HAP-1 (cell line): ENCODE measurements at regions of chr5 and their contacts with region 1.

Region 1: DNA sequence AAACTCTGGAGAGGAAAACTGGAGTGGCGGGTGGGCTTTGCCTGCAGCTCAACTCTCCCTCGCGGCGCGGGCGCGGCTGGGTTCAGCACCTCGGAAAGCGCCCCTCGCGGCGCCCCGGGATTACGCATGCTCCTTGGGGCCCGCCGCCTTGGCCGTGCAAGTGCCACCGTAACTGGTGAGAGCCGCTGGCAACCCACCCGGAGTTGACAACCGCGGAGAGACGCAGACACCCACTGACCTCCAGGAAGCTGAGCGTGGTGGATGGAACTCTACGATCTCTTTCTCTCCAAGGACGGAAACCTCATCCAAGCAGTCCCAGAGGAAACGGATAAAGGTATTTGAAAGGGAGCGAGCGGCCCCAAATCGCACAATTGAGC is 194 bp upstream of the RXFP3 start:
- DNase-seq: peak; percentile 6 to 69
- H3K4me3 ChIP-seq: no peak overlapping the region
- H3K4me1 ChIP-seq: no peaks in the 10 kb centered on the region
- H3K27me3 ChIP-seq: peaks cover 4% of the 10 kb centered on the region; the same call in 1 of the 2 replicates

Region 2: GRCh38 chr5:33439905-33440481 is 496.0 kb before region 1 on chr5:
- in situ Hi-C with region 1: loop called (anchors 10 kb)
- DNase-seq: no peak
- H3K4me3 ChIP-seq: peak overlapping the region; percentile 96
- H3K4me1 ChIP-seq: peaks cover 23% of the 10 kb centered on the region
- H3K27me3 ChIP-seq: 0 out of 2 replicates have a peak, but pooled peaks cover 3% of the 10 kb centered on the region

Region 3: DNA sequence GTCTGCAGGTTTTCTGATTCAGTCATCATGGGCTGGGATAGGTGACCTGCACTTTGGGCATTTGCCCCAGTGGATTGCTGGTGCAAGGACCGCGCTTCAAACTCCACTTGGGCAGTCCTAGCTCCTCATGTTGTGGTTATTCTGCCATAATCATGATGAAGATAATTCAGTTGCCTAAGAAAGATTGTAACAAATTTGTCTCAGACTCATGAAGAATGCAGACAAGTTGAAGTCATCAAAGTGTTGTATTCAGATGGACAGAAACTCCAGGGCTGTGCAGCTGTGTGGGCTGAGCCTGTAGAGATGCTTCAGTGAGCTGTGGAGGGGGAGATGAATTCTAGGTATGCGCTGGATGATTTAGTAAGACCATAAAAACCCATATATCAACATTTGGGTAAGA is 456.7 kb before region 1 on chr5:
- in situ Hi-C with region 1: no loop called
- DNase-seq: no peak
- H3K4me3 ChIP-seq: no peak overlapping the region
- H3K4me1 ChIP-seq: no peaks in the 10 kb centered on the region
- H3K27me3 ChIP-seq: no peaks in the 10 kb centered on the region